CD8-positive, alpha-beta T cell (primary cell): ENCODE measurements at regions of chr11 and their contacts with region 1.

Region 1: GRCh38 chr11:798093-798713 is at the start of gene SLC25A22:
- DNase-seq: peak; percentile 67 to 93 (median 83)
- ATAC-seq: peak; percentile 56
- H3K4me3 ChIP-seq: peak within 1 kb of the TSS; percentile 92 to 99
- H3K4me3 Mint-ChIP-seq: peak within 1 kb of the TSS; percentile 91
- H3K27ac ChIP-seq: peak within 1 kb of the TSS; percentile 78 to 96
- H3K27ac Mint-ChIP-seq: peak within 1 kb of the TSS; percentile 94
- H3K4me1 ChIP-seq: peaks cover 25% of the 10 kb centered on the region
- H3K4me1 Mint-ChIP-seq: peaks cover 16% of the 10 kb centered on the region
- H3K27me3 ChIP-seq: no peaks in the 10 kb centered on the region
- H3K27me3 Mint-ChIP-seq: no peaks in the 10 kb centered on the region
- CTCF ChIP-seq: peak; percentile 81
- total RNA-seq, gene SLC25A22: 11.6 to 15.7 TPM

Region 2: DNA sequence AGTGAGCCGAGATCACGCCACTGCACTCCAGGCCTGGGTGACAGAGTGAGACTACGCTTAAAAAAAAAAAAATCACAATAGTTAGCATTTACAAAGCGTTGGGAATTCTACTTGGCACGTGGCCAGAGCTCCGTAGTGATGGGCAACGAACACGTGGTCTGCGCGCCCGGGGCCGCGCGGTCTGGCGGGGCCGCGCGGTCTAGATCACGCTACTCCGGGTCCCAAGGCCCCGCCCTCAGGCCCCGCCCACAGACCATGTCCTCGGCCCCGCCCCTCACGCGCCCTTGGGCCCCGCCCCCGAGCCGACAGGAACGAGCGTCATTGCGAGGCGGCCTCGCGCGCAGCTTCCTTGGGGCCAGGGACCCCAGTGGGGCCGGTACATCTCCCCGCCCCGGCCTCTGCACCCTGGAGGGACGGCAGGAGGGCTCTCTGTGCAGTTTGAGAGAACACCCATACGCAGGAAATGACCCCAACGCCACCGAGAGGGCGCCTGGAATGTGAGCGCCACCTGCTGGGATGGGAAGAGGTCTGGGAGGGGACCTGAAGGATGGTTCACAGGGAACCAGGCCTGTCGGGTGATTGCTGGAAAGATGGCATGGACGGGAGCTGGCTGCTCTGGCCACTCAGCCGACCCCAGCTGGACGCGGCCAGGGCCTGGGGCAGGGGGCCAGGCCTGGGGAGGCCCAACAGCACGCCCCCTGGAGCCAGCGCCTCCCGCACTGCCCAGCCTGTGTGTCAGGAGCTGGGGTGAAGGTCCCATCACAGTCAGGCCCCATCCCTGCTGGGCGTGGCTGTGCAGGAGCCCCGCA is 350.1 kb before region 1 on chr11:
- CTCF ChIA-PET with region 1: no interaction called
- POLR2A ChIA-PET with region 1: no interaction called
- intact Hi-C with region 1: loop called in 1 of 2 experiments (anchors 2 kb)
- DNase-seq: peak; percentile 92 to 97 (median 94)
- ATAC-seq: peak; percentile 74
- H3K4me3 ChIP-seq: peak overlapping the region; percentile 43 to 69
- H3K4me3 Mint-ChIP-seq: peak overlapping the region; percentile 86
- H3K27ac ChIP-seq: peak overlapping the region; percentile 73 to 94
- H3K27ac Mint-ChIP-seq: peak overlapping the region; percentile 94
- H3K4me1 ChIP-seq: peaks cover 29% of the 10 kb centered on the region
- H3K4me1 Mint-ChIP-seq: peaks cover 19% of the 10 kb centered on the region
- H3K27me3 ChIP-seq: peaks cover 0 to 2% of the 10 kb centered on the region in 2 experiments
- H3K27me3 Mint-ChIP-seq: no peaks in the 10 kb centered on the region
- CTCF ChIP-seq: peak; percentile 68

Region 3: GRCh38 chr11:554824-555472 is 243.3 kb before region 1 on chr11:
- CTCF ChIA-PET with region 1: no interaction called
- POLR2A ChIA-PET with region 1: no interaction called
- intact Hi-C with region 1: loop called (anchors 2 to 5 kb)
- DNase-seq: peak; percentile 54 to 90 (median 73)
- ATAC-seq: peak; percentile 81
- H3K4me3 ChIP-seq: peak overlapping the region; percentile 32 to 39
- H3K4me3 Mint-ChIP-seq: peak overlapping the region; percentile 56
- H3K27ac ChIP-seq: no peak overlapping the region
- H3K27ac Mint-ChIP-seq: no peak overlapping the region
- H3K4me1 ChIP-seq: peaks cover 15% of the 10 kb centered on the region
- H3K4me1 Mint-ChIP-seq: peaks cover 5% of the 10 kb centered on the region
- H3K27me3 ChIP-seq: no peaks in the 10 kb centered on the region
- H3K27me3 Mint-ChIP-seq: no peaks in the 10 kb centered on the region
- CTCF ChIP-seq: peak; percentile 51

Region 4: DNA sequence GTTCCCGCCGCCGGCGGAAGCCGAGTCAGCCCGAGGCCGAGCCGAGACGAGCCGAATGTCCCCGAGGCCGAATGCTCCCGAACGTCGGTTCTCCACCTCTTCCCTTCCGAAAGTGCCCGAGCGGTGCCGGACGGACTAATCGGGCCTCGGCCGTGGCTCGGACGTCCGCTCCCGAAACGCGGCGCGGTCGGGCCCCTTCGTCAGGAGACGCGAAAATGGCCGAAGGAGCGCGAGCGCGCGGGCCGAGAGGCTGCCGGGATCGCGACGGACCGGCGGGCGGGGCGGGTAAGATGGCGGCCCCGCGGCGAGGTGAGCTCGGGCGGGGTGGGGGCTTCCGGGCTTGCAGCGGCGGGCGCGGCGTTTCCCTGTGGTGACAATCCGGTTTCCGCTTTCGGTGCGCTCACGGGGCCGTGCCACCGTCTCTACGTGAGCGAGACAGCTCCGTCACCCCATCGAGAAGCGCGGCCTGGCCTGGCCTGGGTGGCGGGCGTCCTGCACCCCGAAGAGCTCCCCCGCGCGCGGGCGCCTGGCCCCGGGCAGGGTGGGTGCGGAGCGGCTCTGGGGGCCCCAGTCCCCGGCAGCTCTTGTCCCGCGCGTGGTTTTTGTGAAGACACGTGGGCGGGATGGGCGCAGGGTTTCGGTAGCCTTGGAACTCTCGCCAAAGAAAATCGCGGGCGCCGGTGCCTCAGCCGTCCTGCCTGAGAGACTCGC is 102.5 kb before region 1 on chr11 and contains the start of gene TMEM80:
- CTCF ChIA-PET with region 1: no interaction called
- POLR2A ChIA-PET with region 1: no interaction called
- intact Hi-C with region 1: loop called (anchors 1 to 5 kb)
- DNase-seq: peak; percentile 94 to 99 (median 97)
- ATAC-seq: peak; percentile 57
- H3K4me3 ChIP-seq: peak within 1 kb of the TSS; percentile 98
- H3K4me3 Mint-ChIP-seq: peak within 1 kb of the TSS; percentile 86
- H3K27ac ChIP-seq: peak within 1 kb of the TSS; percentile 94 to 100
- H3K27ac Mint-ChIP-seq: peak within 1 kb of the TSS; percentile 96
- H3K4me1 ChIP-seq: peaks cover 53% of the 10 kb centered on the region
- H3K4me1 Mint-ChIP-seq: peaks cover 55% of the 10 kb centered on the region
- H3K27me3 ChIP-seq: no peaks in the 10 kb centered on the region
- H3K27me3 Mint-ChIP-seq: no peaks in the 10 kb centered on the region
- CTCF ChIP-seq: no peak
- total RNA-seq, gene TMEM80: 24.8 to 25.2 TPM

Region 5: DNA sequence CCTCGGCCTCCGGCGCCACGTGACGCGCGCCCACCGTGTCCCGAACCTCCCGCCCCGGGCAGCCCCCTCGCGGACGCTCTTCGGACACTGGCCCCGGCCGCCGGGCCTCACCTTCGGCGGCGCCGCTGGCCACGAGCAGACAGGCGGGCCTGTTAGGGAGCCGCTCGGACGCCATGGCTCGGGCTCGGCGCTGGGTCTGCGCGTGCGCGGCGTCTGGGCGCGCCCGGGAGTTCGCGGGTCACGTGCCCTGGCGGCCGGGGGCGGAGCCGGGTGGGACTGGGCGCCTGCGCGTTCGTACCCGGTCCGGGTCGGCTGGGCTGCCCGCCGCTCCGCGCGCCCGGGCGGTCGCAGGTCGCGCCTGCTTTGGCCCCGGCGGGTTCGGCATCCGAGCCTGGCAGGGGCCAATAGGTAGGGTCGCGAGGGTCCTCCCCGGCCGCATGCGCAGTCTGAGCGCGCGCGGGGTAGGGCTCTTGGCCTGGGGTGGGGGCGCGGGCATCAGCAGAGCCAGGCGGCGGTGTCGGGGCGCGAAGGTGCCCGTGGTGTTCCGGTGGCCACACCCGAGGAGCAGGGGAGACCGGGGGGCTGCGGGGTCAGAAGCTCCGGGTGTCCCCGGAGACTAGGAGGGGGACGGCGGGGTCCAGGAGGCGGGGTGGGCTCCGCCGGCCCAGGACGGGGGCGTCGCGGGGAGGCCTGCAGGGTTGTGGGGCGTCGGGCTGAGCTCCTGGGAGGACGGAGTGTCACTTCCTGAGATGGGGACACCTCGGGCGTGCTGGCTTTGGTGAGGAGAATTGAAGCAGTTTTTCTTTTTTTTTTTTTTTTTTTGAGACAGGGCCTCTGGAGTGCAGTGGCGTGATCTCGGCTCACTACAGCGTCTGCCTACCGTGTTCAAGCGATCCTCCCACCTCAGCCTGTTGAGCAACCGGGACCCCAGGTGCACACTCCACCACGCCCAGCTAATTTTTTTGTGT is 20.6 kb before region 1 on chr11 and contains the start of gene GATD1:
- CTCF ChIA-PET with region 1: interaction called, 4 read pairs
- POLR2A ChIA-PET with region 1: interaction called, 3 read pairs
- intact Hi-C with region 1: loop called (anchors 1 kb)
- DNase-seq: peak; percentile 87 to 96 (median 94)
- ATAC-seq: peak; percentile 88
- H3K4me3 ChIP-seq: peak within 1 kb of the TSS; percentile 60 to 84
- H3K4me3 Mint-ChIP-seq: peak within 1 kb of the TSS; percentile 84
- H3K27ac ChIP-seq: peak within 1 kb of the TSS; percentile 48 to 64
- H3K27ac Mint-ChIP-seq: peak within 1 kb of the TSS; percentile 72
- H3K4me1 ChIP-seq: peaks cover 24% of the 10 kb centered on the region
- H3K4me1 Mint-ChIP-seq: peaks cover 26% of the 10 kb centered on the region
- H3K27me3 ChIP-seq: no peaks in the 10 kb centered on the region
- H3K27me3 Mint-ChIP-seq: no peaks in the 10 kb centered on the region
- CTCF ChIP-seq: no peak
- total RNA-seq, gene GATD1: 21.2 to 22.6 TPM

Region 6: GRCh38 chr11:925496-926321 is 127.5 kb after region 1 on chr11 and contains the start of gene AP2A2:
- CTCF ChIA-PET with region 1: interaction called, 3 read pairs
- POLR2A ChIA-PET with region 1: no interaction called
- intact Hi-C with region 1: loop called in 1 of 2 experiments (anchors 1 kb)
- DNase-seq: peak; percentile 76 to 96 (median 92)
- ATAC-seq: peak; percentile 72
- H3K4me3 ChIP-seq: peak within 1 kb of the TSS; percentile 48 to 70
- H3K4me3 Mint-ChIP-seq: peak within 1 kb of the TSS; percentile 82
- H3K27ac ChIP-seq: peak within 1 kb of the TSS; percentile 37 to 67
- H3K27ac Mint-ChIP-seq: peak within 1 kb of the TSS; percentile 88
- H3K4me1 ChIP-seq: peaks cover 41% of the 10 kb centered on the region
- H3K4me1 Mint-ChIP-seq: peaks cover 32% of the 10 kb centered on the region
- H3K27me3 ChIP-seq: no peaks in the 10 kb centered on the region
- H3K27me3 Mint-ChIP-seq: no peaks in the 10 kb centered on the region
- CTCF ChIP-seq: peak; percentile 67
- total RNA-seq, gene AP2A2: 38.6 to 44.3 TPM